Natural killer cell (primary cell): ENCODE measurements at regions of chr15 and their contacts with region 1.

Region 1: GRCh38 chr15:65286704-65287519 is at the start of gene PARP16:
- DNase-seq: peak; percentile 90 to 95
- ATAC-seq: peak; percentile 95 to 98 (median 95)
- H3K4me3 ChIP-seq: peak within 1 kb of the TSS; percentile 86
- H3K4me3 Mint-ChIP-seq: peak within 1 kb of the TSS; percentile 92
- H3K27ac ChIP-seq: peak within 1 kb of the TSS; percentile 85
- H3K27ac Mint-ChIP-seq: peak within 1 kb of the TSS; percentile 88 to 91
- H3K4me1 ChIP-seq: peaks cover 20% of the 10 kb centered on the region
- H3K4me1 Mint-ChIP-seq: peaks cover 35% of the 10 kb centered on the region in 2 donors
- H3K27me3 ChIP-seq: no peaks in the 10 kb centered on the region
- H3K27me3 Mint-ChIP-seq: no peaks in the 10 kb centered on the region
- CTCF ChIP-seq: peak; percentile 27
- total RNA-seq, gene PARP16: 11.7 to 19.3 (median 16.4) TPM

Region 2: GRCh38 chr15:65184868-65185738 is 101.8 kb before region 1 on chr15 and contains the start of gene CLPX:
- intact Hi-C with region 1: loop called (anchors 2 kb)
- DNase-seq: peak; percentile 80 to 97
- ATAC-seq: peak; percentile 88 to 96 (median 91)
- H3K4me3 ChIP-seq: peak within 1 kb of the TSS; percentile 68
- H3K4me3 Mint-ChIP-seq: peak within 1 kb of the TSS; percentile 93
- H3K27ac ChIP-seq: peak within 1 kb of the TSS; percentile 76
- H3K27ac Mint-ChIP-seq: peak within 1 kb of the TSS; percentile 91 to 92
- H3K4me1 ChIP-seq: peaks cover 24% of the 10 kb centered on the region
- H3K4me1 Mint-ChIP-seq: peaks cover 26 to 31% of the 10 kb centered on the region in 2 donors
- H3K27me3 ChIP-seq: no peaks in the 10 kb centered on the region
- H3K27me3 Mint-ChIP-seq: no peaks in the 10 kb centered on the region
- CTCF ChIP-seq: no peak
- total RNA-seq, gene CLPX: 35.4 to 39.9 (median 38.2) TPM